ENCODE measurements at regions of chr13 and their contacts with region 1.

Region 1: GRCh38 chr13:27665333-27665732 is 43.6 kb downstream of the POLR1D start:
- DNase-seq: no peak
- H3K4me3 ChIP-seq: no peak overlapping the region
- H3K27ac ChIP-seq: no peak overlapping the region
- H3K4me1 ChIP-seq: peaks cover 0 to 37% (median 11%) of the 10 kb centered on the region in 4 donors
- H3K27me3 ChIP-seq: no peaks in the 10 kb centered on the region
- CTCF ChIP-seq: no peak
- EP300 ChIP-seq: no peak
- POLR2A ChIP-seq: no peak

Region 2: GRCh38 chr13:27573265-27573664 is 92.1 kb before region 1 on chr13:
- intact Hi-C with region 1: loop called (anchors 10 kb)
- DNase-seq: no peak
- H3K4me3 ChIP-seq: no peak overlapping the region
- H3K27ac ChIP-seq: no peak overlapping the region
- H3K4me1 ChIP-seq: no peaks in the 10 kb centered on the region
- H3K27me3 ChIP-seq: no peaks in the 10 kb centered on the region
- CTCF ChIP-seq: no peak
- EP300 ChIP-seq: no peak
- POLR2A ChIP-seq: no peak

Region 3: DNA sequence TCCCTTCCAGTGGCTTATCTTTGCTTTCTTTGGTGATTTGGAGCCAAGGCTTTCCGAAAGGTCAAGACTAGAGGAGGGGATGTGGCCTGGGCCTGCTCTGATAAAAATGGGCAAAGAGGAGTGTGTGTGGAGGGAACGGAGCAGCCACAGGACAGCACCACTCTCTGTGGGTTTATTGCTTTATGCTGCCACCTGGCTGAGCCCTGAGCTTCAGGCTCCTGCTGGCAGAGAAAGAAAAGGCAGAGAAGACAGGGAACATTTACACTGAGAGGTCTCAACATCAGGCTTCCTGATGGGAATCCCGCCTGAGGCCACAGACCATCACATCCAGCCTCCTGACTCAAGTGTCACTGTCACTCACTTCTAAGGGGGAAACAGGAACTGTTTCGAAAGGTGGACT is 117.8 kb after region 1 on chr13:
- intact Hi-C with region 1: loop called (anchors 10 kb)
- DNase-seq: no peak
- H3K4me3 ChIP-seq: no peak overlapping the region
- H3K27ac ChIP-seq: no peak overlapping the region
- H3K4me1 ChIP-seq: no peaks in the 10 kb centered on the region
- H3K27me3 ChIP-seq: peaks cover 0 to 33% (median 12%) of the 10 kb centered on the region in 3 donors
- CTCF ChIP-seq: peak in 1 of 4 experiments; percentile 26
- EP300 ChIP-seq: no peak
- POLR2A ChIP-seq: no peak